Activated CD4-positive, alpha-beta T cell treated with anti-CD3 and anti-CD28 coated beads, Interleukin-2, amount 10 ng/mL, durations not matched to agents 24 days and 14 days (primary cell): ENCODE measurements at regions of chr17 and their contacts with region 1.

Region 1: GRCh38 chr17:3762922-3763776 is 37.8 kb downstream of the ITGAE start:
- DNase-seq: peak; percentile 79
- H3K4me3 Mint-ChIP-seq: peak overlapping the region; percentile 72
- H3K27ac Mint-ChIP-seq: peak overlapping the region; percentile 89
- H3K4me1 Mint-ChIP-seq: peaks cover 45% of the 10 kb centered on the region
- H3K27me3 Mint-ChIP-seq: peaks cover 2% of the 10 kb centered on the region

Region 2: GRCh38 chr17:3647769-3648555 is 115.2 kb before region 1 on chr17:
- intact Hi-C with region 1: no loop called
- DNase-seq: peak; percentile 83
- H3K4me3 Mint-ChIP-seq: no peak overlapping the region
- H3K27ac Mint-ChIP-seq: peak overlapping the region; percentile 11
- H3K4me1 Mint-ChIP-seq: peaks cover 19% of the 10 kb centered on the region
- H3K27me3 Mint-ChIP-seq: no peaks in the 10 kb centered on the region

Region 3: GRCh38 chr17:3738562-3739295 is 24.4 kb before region 1 on chr17:
- intact Hi-C with region 1: loop called (anchors 1 kb)
- DNase-seq: peak; percentile 85
- H3K4me3 Mint-ChIP-seq: peak overlapping the region; percentile 24
- H3K27ac Mint-ChIP-seq: peak overlapping the region; percentile 64
- H3K4me1 Mint-ChIP-seq: peaks cover 35% of the 10 kb centered on the region
- H3K27me3 Mint-ChIP-seq: no peaks in the 10 kb centered on the region

Region 4: DNA sequence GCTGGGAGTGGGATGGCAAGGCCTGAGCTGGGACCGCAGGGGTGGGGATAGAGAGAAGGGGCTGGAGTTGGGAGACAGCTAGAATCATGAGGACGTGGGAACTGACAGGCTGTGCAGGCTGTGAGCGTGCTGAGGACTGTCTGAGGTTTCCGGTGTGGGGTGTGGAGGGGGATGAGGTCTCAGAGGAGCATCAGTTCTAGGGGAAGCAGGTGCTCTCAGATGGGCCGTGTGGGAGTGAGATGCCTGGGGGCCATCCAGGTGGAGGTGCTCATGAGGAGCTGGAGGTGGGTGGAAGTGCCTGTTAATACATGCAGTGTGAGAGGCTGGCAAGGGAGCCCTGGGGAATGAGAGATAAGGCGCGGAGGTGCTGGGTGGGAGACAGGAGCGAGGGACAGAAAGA is 12.2 kb before region 1 on chr17:
- intact Hi-C with region 1: loop called (anchors 1 kb)
- DNase-seq: peak; percentile 84
- H3K4me3 Mint-ChIP-seq: peak overlapping the region; percentile 67
- H3K27ac Mint-ChIP-seq: peak overlapping the region; percentile 72
- H3K4me1 Mint-ChIP-seq: peaks cover 34% of the 10 kb centered on the region
- H3K27me3 Mint-ChIP-seq: no peaks in the 10 kb centered on the region

Region 5: DNA sequence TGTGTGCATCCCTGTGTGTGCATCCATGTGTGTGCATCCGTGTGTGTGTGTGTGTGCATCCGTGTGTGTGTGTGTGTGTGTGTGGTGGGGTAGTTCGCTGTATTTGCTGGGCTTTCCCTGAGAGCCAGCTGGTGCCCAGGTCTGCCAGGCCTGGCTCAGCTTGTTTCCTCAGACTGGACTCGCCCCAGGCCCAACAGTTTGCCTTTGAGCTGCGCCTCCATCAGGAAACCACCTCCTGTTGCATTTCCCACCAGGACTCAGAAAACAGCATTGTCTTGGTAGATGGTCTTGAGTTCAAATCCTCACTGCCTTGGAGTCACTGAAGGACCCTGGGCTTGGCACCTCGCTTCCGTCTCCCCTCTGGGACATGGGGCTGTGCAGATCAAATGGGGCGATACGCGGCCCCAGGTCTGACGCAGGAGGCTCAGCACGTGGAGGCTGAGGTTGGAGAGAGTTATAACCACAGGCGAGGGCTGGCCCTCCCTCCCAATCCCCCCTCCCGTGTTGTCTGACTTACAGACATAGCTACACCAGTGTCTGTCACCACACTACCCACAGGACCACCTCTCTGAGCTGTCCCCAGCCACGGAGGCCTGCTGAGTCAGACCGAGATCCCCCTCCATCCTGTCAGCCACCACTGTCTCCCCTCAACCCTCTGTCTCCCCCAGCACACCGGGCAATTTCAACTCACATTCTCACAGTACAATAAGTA is 33.1 kb after region 1 on chr17:
- intact Hi-C with region 1: loop called (anchors 1 kb)
- DNase-seq: peak; percentile 83
- H3K4me3 Mint-ChIP-seq: peak overlapping the region; percentile 43
- H3K27ac Mint-ChIP-seq: peak overlapping the region; percentile 34
- H3K4me1 Mint-ChIP-seq: peaks cover 36% of the 10 kb centered on the region
- H3K27me3 Mint-ChIP-seq: no peaks in the 10 kb centered on the region

Region 6: GRCh38 chr17:4043862-4044261 is 280.7 kb after region 1 on chr17:
- intact Hi-C with region 1: no loop called
- DNase-seq: peak; percentile 65
- H3K4me3 Mint-ChIP-seq: no peak overlapping the region
- H3K27ac Mint-ChIP-seq: peak overlapping the region; percentile 20
- H3K4me1 Mint-ChIP-seq: peaks cover 8% of the 10 kb centered on the region
- H3K27me3 Mint-ChIP-seq: no peaks in the 10 kb centered on the region